Breast epithelium (tissue), 4 donors: ENCODE measurements at regions of chr14 and their contacts with region 1.

Region 1: GRCh38 chr14:25032092-25032784 is 17.7 kb downstream of the STXBP6 start:
- DNase-seq: no peak
- H3K4me3 ChIP-seq: no peak overlapping the region
- H3K27ac ChIP-seq: no peak overlapping the region
- H3K4me1 ChIP-seq: no peaks in the 10 kb centered on the region
- H3K27me3 ChIP-seq: no peaks in the 10 kb centered on the region
- CTCF ChIP-seq: no peak
- POLR2A ChIP-seq: no peak

Region 2: GRCh38 chr14:25042362-25043299 is 10.4 kb after region 1 on chr14:
- intact Hi-C with region 1: loop called (anchors 1 kb)
- DNase-seq: no peak
- H3K4me3 ChIP-seq: no peak overlapping the region
- H3K27ac ChIP-seq: no peak overlapping the region
- H3K4me1 ChIP-seq: no peaks in the 10 kb centered on the region
- H3K27me3 ChIP-seq: no peaks in the 10 kb centered on the region
- CTCF ChIP-seq: peak in 2 of 3 donors; percentile 30 to 40
- POLR2A ChIP-seq: no peak

Region 3: DNA sequence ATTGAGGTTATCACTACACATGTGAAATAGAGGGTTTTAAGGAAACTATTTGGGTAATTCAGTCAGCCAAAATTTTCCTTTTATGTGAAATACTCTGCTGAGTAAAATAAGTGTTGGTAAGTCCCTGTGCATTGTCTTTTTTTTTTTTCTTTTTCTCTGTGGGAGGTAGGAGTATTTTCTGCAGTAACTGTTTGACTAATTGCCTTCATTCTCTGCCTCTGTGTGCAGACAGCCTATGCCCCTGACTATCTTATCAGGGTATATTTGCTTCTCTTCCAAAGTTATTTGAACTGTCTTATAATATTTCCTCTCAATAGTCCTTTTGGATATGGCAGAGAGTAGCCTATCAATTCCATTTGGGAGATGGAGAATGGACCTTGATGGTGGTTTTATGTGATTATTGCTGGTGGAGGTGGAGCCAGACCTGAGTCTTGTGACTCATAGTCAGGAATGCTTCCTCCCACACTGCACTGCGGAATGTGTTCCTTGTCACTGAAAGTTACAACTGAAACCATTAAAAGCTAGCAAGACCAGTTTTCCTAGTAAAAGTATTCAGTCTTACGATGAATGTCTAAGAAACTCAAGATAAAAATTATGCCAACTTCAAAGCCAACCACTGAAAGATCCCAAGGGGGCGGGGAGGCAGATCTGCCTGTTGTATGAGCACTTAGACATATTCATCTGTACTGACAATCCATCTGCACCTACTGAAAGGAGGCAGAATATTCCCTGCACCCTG is 58.6 kb after region 1 on chr14:
- intact Hi-C with region 1: no loop called
- DNase-seq: peak in 1 of 2 donors; percentile 22
- H3K4me3 ChIP-seq: no peak overlapping the region
- H3K27ac ChIP-seq: no peak overlapping the region
- H3K4me1 ChIP-seq: no peaks in the 10 kb centered on the region
- H3K27me3 ChIP-seq: no peaks in the 10 kb centered on the region
- CTCF ChIP-seq: no peak
- POLR2A ChIP-seq: no peak